ENCODE measurements at regions of chr7 and their contacts with region 1.

Region 1: GRCh38 chr7:142859829-142860228 is 5.0 kb downstream of the EPHB6 start:
- DNase-seq: no peak
- H3K4me3 ChIP-seq: no peak overlapping the region
- H3K4me3 Mint-ChIP-seq: no peak overlapping the region
- H3K27ac ChIP-seq: no peak overlapping the region
- H3K27ac Mint-ChIP-seq: peak overlapping the region in 2 of 7 donors; percentile 38 to 45
- H3K4me1 ChIP-seq: peaks cover 18% of the 10 kb centered on the region
- H3K4me1 Mint-ChIP-seq: peaks cover 12 to 22% (median 16%) of the 10 kb centered on the region in 4 donors
- H3K27me3 ChIP-seq: no peaks in the 10 kb centered on the region
- H3K27me3 Mint-ChIP-seq: no peaks in the 10 kb centered on the region

Region 2: DNA sequence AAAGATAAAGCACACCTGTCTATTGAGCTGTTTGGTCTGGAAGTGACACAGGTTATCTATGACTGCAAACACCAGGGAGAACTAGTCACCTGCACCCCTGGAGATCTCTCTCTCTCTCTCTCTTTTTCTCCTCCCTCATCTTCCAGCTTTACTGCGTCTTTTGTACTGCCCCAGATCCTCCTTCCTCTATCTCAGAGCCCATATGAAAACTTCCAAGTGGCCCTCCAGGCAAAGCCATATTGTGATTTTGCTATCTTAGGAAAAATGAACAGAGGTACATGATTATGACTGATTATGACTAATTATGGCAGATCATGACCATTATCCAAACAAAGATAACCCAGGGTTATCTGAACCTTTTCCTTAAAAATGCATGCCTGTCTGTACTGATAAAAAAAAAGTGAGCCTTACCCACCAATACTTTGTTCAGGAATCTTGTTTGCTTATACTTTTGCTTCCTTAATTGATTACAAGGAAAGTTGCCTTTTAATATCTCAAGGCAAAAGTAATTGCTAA is 17.5 kb before region 1 on chr7:
- CTCF ChIA-PET with region 1: no interaction called
- POLR2A ChIA-PET with region 1: no interaction called
- intact Hi-C with region 1: no loop called
- DNase-seq: no peak
- H3K4me3 ChIP-seq: no peak overlapping the region
- H3K4me3 Mint-ChIP-seq: no peak overlapping the region
- H3K27ac ChIP-seq: no peak overlapping the region
- H3K27ac Mint-ChIP-seq: no peak overlapping the region
- H3K4me1 ChIP-seq: no peaks in the 10 kb centered on the region
- H3K4me1 Mint-ChIP-seq: no peaks in the 10 kb centered on the region
- H3K27me3 ChIP-seq: no peaks in the 10 kb centered on the region
- H3K27me3 Mint-ChIP-seq: peaks cover 0 to under 1% of the 10 kb centered on the region in 2 donors

Region 3: GRCh38 chr7:142873281-142873787 is 13.5 kb after region 1 on chr7:
- CTCF ChIA-PET with region 1: interaction called, 10 read pairs
- POLR2A ChIA-PET with region 1: interaction called, 4 read pairs
- intact Hi-C with region 1: no loop called
- DNase-seq: no peak
- H3K4me3 ChIP-seq: no peak overlapping the region
- H3K4me3 Mint-ChIP-seq: no peak overlapping the region
- H3K27ac ChIP-seq: no peak overlapping the region
- H3K27ac Mint-ChIP-seq: peak overlapping the region in 1 of 7 donors; percentile 17
- H3K4me1 ChIP-seq: no peaks in the 10 kb centered on the region
- H3K4me1 Mint-ChIP-seq: no peaks in the 10 kb centered on the region
- H3K27me3 ChIP-seq: no peaks in the 10 kb centered on the region
- H3K27me3 Mint-ChIP-seq: peaks cover 0 to 3% of the 10 kb centered on the region in 2 donors

Region 4: GRCh38 chr7:142916508-142916907 is 56.7 kb after region 1 on chr7:
- CTCF ChIA-PET with region 1: no interaction called
- POLR2A ChIA-PET with region 1: no interaction called
- intact Hi-C with region 1: no loop called
- DNase-seq: no peak
- H3K4me3 ChIP-seq: no peak overlapping the region
- H3K4me3 Mint-ChIP-seq: no peak overlapping the region
- H3K27ac ChIP-seq: no peak overlapping the region
- H3K27ac Mint-ChIP-seq: no peak overlapping the region
- H3K4me1 ChIP-seq: no peaks in the 10 kb centered on the region
- H3K4me1 Mint-ChIP-seq: no peaks in the 10 kb centered on the region
- H3K27me3 ChIP-seq: no peaks in the 10 kb centered on the region
- H3K27me3 Mint-ChIP-seq: peaks cover 15 to 20% of the 10 kb centered on the region in 2 donors

Measured in CD4-positive, alpha-beta memory T cell (primary cell).